A673 (cell line): ENCODE measurements at regions of chr2 and their contacts with region 1.

Region 1: DNA sequence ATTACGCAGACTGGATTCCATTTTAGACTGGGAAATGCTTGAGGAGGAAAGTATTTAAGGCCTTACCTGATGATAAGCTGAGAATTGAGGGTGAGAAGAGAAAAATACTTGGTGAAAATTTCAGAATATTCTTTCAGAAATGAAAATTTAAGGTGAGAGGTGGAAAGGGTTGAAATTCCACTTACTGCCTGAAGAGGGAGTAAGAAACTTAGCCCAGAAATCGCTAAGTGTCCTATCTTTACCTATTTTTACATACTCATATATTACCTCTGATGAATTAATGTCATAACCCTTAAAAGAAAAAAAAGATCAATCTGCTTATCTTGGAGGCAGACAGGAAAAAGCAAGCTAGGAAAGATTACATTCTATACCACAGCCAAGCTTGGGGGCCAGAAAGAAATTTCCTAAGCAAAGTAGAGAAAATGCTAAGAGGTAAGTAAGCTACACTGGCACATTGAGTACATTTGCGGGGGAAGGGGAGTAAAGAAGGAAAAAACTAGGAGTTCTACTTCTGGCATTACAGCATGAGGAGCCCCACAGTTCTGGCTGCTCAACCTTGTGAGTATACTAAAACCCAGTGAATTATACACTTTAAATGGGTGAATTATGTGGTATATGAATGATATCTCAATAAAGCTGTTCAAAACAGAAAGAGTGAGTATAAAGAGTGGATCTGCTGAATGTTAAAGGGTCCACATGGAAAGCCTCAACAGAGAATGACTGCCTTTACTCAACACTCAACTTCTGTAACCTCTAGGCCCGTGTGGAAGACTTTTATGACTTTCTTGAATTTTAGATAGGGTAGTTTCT is 33.8 kb downstream of the SMC6 start:
- DNase-seq: peak; percentile 19
- H3K4me3 ChIP-seq: no peak overlapping the region
- H3K27ac ChIP-seq: no peak overlapping the region
- H3K4me1 ChIP-seq: no peaks in the 10 kb centered on the region
- H3K27me3 ChIP-seq: no peaks in the 10 kb centered on the region
- CTCF ChIP-seq: peak; percentile 76

Region 2: GRCh38 chr2:17830053-17831034 is 110.6 kb after region 1 on chr2:
- CTCF ChIA-PET with region 1: no interaction called
- POLR2A ChIA-PET with region 1: no interaction called
- intact Hi-C with region 1: loop called (anchors 2 kb)
- DNase-seq: peak; percentile 95
- H3K4me3 ChIP-seq: peak overlapping the region; percentile 17
- H3K27ac ChIP-seq: no peak overlapping the region
- H3K4me1 ChIP-seq: no peaks in the 10 kb centered on the region
- H3K27me3 ChIP-seq: no peaks in the 10 kb centered on the region
- CTCF ChIP-seq: peak; percentile 99

Region 3: DNA sequence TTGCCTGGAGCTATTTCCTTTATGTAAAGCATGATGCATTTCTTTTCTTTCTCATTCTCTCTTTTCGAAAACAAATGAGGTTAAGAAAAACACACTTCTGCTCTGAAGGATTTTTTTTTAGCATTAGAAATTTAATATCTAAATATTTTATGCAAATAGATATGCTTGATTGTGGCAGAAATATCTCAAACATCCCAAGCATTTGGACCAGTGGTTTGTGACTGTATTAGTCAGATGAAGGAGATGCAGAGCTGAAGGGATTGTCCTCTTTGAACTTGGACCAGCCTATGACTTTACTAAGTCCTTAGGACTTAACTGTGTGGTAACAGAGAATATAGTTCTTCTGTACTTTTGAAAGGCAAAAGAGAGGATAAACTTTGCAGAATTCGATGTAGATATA is 1205.5 kb after region 1 on chr2:
- CTCF ChIA-PET with region 1: no interaction called
- POLR2A ChIA-PET with region 1: no interaction called
- intact Hi-C with region 1: no loop called
- DNase-seq: no peak
- H3K4me3 ChIP-seq: no peak overlapping the region
- H3K27ac ChIP-seq: no peak overlapping the region
- H3K4me1 ChIP-seq: no peaks in the 10 kb centered on the region
- H3K27me3 ChIP-seq: peaks cover 3% of the 10 kb centered on the region
- CTCF ChIP-seq: no peak